Heart right ventricle (tissue), 16 donors: ENCODE measurements at regions of chr19 and their contacts with region 1.

Region 1: DNA sequence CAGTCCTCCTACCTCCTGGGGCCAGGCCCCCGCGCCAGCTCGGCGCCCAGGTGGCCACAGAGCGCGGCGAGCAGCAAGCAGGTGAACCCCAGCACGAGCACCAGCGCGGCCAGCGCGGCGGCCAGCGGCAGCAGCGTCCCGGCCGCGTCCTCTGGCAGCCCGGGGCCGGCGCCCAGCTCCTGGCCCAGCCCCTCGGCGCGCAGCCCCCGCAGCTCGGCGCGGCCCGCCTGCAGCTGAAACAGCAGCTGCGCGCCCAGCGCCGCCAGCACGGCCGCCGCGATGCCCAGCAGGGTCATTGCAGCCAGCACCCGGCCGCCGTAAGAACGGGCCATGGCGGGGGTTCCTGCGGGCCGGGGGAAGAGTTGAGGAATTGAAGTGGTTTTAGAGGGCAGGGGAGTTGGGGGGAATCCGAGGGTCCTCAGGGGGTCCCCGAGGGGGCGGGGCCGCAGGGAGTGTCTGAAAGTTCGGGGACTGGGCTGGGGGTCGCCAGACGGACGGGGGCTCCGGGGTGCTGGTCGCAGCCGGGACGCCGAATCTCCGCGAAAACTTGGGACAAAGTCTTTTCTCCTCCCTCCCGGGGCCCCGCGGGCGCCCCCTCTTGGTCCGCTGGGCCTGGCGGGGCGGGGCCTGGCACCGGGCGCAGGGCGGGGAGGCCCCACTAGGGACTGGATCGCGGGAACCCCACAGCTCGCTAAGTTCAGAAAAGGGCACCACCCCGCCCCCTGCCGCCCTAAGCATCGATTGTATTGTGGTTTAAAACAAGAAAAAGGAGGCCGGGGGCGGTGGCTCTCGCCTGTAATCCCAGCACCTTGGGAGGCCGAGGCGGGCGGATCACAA is at the start of gene TMEM221:
- DNase-seq: peak; percentile 42 to 61
- ATAC-seq: peak; percentile 64 to 85 (median 76)
- H3K4me3 ChIP-seq: peak within 1 kb of the TSS in 9 of 10 donors; percentile 33 to 60 (median 49)
- H3K27ac ChIP-seq: no peak within 1 kb of the TSS
- H3K4me1 ChIP-seq: peaks cover 0 to 10% (median 7%) of the 10 kb centered on the region in 9 donors
- H3K27me3 ChIP-seq: peaks cover 0 to 36% (median 3%) of the 10 kb centered on the region in 7 donors
- CTCF ChIP-seq: peak; percentile 21 to 75 (median 63)
- total RNA-seq, gene TMEM221: 0.12 to 0.20 TPM in 2 of 10 donors, not detected in the others

Region 2: DNA sequence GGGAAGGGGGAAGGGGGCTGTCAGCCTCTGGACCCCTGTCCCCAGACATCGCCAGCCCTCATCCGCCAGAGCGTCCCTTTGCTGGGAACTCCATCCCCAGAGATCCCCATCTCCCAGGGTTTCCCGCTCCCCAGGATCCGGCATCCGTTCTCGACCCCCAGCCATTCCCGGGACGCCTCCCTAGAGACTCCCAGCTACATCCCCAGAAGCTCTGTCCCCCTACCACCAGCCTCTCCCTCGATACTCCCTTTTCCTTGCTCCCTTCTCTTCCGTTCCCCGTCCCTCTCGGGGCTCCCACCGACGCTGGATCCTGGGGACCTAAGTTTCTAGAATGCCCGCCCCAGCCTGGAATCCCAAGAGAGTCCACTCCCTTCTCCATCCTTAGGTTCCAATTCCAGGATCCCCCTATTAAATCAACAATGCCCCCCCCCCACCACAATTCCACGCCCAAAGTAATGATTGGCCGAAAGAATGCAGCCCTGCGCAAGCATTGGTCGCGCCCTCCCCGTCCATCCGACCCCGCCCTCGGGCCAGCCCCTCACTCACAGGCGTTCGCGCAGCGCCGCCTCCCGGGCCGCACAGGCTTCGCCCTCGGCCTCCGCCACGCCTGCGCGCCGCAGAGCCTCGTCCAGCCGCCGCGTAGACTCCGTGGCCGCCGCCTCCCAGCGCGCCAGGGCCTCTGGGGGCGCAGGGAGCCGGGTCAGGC is 57.5 kb before region 1 on chr19:
- intact Hi-C with region 1: loop called in 1 of 10 experiments (anchors 5 kb)
- DNase-seq: peak; percentile 93 to 94
- ATAC-seq: peak; percentile 96 to 99 (median 98)
- H3K4me3 ChIP-seq: peak overlapping the region; percentile 21 to 58 (median 52)
- H3K27ac ChIP-seq: peak overlapping the region in 6 of 10 donors; percentile 5 to 35 (median 29)
- H3K4me1 ChIP-seq: peaks cover 0 to 40% (median 23%) of the 10 kb centered on the region in 9 donors
- H3K27me3 ChIP-seq: peaks cover 0 to 50% (median 15%) of the 10 kb centered on the region in 7 donors
- CTCF ChIP-seq: peak; percentile 50 to 87 (median 80)

Region 3: DNA sequence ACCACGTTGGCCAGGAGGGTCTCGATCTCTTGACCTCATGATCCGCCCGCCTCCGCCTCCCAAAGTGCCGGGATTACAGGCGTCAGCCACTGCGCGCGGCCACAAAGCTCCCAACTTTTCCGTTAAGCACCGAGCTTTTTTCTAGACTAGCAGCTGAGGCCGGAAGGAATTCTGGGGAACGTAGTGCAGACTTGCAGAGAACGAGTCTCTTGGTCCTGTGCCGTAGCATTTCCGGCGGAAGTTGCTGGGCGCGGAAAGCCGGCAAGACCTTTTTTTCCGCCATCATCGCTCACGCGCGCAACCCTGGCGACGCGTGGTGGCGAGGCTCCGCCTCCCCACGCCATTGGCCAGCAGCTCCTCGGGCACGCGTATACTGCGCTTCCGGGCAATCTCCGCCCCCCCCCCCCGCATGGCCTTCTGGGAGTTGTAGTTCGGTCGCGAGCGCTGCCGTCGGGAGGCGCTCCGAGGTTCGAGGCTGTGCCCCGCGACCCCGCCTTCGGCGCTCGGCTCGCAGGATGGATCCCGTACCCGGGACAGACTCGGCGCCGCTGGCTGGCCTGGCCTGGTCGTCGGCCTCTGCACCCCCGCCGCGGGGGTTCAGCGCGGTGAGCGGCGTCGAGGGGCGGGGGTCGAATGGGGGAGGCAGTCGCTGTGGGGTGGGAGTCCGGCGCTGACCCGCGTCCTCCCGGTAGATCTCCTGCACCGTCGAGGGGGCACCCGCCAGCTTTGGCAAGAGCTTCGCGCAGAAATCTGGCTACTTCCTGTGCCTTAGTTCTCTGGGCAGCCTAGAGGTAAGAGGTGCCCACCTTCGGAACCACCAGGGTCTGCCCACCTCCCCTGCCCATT is 28.5 kb before region 1 on chr19 and contains the start of gene MVB12A:
- intact Hi-C with region 1: no loop called
- DNase-seq: peak; percentile 97 to 98
- ATAC-seq: peak; percentile 97 to 99 (median 98)
- H3K4me3 ChIP-seq: peak within 1 kb of the TSS; percentile 52 to 99 (median 85)
- H3K27ac ChIP-seq: peak within 1 kb of the TSS in 9 of 10 donors; percentile 64 to 93 (median 81)
- H3K4me1 ChIP-seq: peaks cover 0 to 19% (median 15%) of the 10 kb centered on the region in 9 donors
- H3K27me3 ChIP-seq: no peaks in the 10 kb centered on the region
- CTCF ChIP-seq: no peak
- total RNA-seq, gene MVB12A: 11.7 to 26.8 (median 13.4) TPM

Region 4: GRCh38 chr19:17570791-17571190 is 122.4 kb after region 1 on chr19:
- intact Hi-C with region 1: loop called in 4 of 10 experiments (anchors 5 to 10 kb)
- DNase-seq: no peak
- ATAC-seq: no peak
- H3K4me3 ChIP-seq: no peak overlapping the region
- H3K27ac ChIP-seq: no peak overlapping the region
- H3K4me1 ChIP-seq: peaks cover 0 to 13% (median 0%) of the 10 kb centered on the region in 9 donors
- H3K27me3 ChIP-seq: no peaks in the 10 kb centered on the region
- CTCF ChIP-seq: no peak

Region 5: GRCh38 chr19:17579661-17580244 is 131.4 kb after region 1 on chr19:
- intact Hi-C with region 1: loop called in 4 of 10 experiments (anchors 5 to 10 kb)
- DNase-seq: peak; percentile 35 to 55
- ATAC-seq: peak; percentile 54 to 81 (median 68)
- H3K4me3 ChIP-seq: no peak overlapping the region
- H3K27ac ChIP-seq: no peak overlapping the region
- H3K4me1 ChIP-seq: peaks cover 0 to 3% (median 0%) of the 10 kb centered on the region in 9 donors
- H3K27me3 ChIP-seq: no peaks in the 10 kb centered on the region
- CTCF ChIP-seq: no peak

Region 6: DNA sequence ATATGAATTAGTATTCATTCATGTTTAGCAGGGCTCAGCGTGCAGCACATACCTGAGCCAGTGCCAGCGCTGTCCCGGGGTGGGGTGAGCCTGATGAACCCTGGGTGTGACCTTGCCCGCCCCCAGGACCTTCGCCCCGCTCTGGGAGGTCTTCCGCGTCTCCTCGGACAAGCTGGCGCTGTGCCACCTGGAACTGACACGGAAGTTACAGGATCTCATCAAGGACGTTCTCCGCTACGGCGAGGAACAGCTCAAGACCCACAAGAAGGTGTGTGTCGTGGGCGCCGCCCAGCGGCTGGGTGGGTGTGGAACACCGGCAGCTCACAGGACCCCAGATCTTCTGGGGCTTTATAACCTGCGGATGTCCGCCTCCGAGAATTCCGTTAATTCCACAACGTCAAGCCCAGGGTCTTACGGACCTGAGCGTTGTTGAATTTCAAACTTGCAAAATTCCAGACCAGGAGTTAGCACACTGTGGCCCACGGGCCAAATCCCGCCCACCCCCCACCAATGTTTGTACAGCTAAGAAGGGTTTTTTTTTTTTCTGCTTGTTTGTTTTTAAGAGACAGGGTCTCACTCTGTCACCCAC is 318.3 kb after region 1 on chr19:
- intact Hi-C with region 1: loop called in 4 of 10 experiments (anchors 10 kb)
- DNase-seq: peak; percentile 70 to 81
- ATAC-seq: peak; percentile 72 to 93 (median 82)
- H3K4me3 ChIP-seq: peak overlapping the region in 5 of 10 donors; percentile 6 to 29 (median 27)
- H3K27ac ChIP-seq: peak overlapping the region in 1 of 10 donors; percentile 36
- H3K4me1 ChIP-seq: peaks cover 0 to 13% (median 6%) of the 10 kb centered on the region in 9 donors
- H3K27me3 ChIP-seq: peaks cover 0 to 10% (median 0%) of the 10 kb centered on the region in 7 donors
- CTCF ChIP-seq: peak; percentile 63 to 88 (median 80)

Region 7: DNA sequence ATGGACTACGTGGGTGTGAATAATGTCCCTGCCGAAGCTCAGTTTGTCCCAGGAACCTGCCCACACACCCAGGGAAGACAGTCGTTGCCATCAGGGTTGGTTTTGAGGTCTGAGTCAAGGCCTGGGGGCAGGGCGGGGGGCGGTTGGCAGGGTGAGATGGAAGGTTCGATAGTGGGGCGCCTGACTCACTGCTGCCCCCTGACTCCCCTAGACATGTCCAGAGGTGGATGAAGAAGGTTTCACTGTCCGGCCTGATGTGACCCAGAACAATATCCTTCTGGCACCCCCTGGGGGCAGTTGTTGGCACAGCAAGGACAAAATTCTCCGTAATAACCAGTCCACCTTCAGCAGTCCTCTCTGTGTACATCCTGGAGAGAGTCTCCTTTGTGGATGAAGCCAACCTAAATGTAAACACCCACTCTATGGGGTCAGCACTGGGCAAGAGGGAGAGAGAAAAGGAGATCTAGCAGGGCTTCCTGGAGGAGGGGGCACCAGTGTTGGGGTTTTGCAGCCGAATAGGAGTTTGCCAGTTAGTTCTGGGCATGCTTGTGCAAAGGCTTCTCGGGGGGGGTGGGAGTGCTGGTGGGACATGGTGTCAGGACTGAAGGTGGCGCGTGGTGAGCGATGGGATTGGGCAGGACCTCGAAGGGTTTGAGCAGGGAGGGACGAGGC is 327.0 kb after region 1 on chr19:
- intact Hi-C with region 1: loop called in 2 of 10 experiments (anchors 10 kb)
- DNase-seq: no peak
- ATAC-seq: no peak
- H3K4me3 ChIP-seq: no peak overlapping the region
- H3K27ac ChIP-seq: no peak overlapping the region
- H3K4me1 ChIP-seq: peaks cover 0 to 10% (median 5%) of the 10 kb centered on the region in 9 donors
- H3K27me3 ChIP-seq: peaks cover 9 to 61% (median 39%) of the 10 kb centered on the region in 7 donors
- CTCF ChIP-seq: peak in 7 of 9 donors; percentile 29 to 56 (median 44)